Panc1 (cell line): ENCODE measurements at regions of chr1 and their contacts with region 1.

Region 1: DNA sequence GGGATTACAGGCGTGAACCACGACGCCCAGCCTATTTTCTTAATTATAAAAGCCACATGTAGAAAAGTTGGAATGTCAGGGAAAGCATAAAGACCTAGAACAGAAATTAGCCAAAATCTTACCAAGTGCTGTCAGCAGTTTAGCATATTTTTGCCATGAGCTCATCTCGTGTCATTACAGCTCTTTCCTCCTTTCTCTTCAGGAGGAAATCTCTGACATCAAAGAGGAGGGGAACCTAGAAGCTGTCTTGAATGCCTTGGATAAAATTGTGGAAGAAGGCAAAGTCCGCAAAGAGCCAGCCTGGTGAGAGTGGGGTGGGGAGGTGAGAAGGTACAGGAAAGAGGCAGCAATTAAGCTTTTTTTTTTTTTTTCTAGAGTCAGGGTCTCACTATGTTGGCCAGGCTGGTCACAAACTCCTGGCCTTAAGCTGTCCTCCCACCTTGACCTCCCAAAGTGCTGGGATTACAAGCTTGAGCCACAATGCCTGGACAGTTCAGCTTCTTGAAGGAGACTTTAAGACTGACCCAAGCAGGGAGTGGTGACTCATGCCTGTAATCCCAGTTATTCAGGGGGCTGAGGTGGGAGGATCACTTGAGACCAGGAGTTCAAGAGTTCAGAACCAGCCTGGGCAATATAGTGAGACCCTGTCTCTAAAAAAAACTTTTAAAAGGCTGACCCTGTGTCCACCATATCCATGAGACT is 8.4 kb upstream of the BGLAP start:
- DNase-seq: no peak
- ATAC-seq: no peak
- H3K4me3 ChIP-seq: no peak overlapping the region
- H3K27ac ChIP-seq: no peak overlapping the region
- H3K4me1 ChIP-seq: no peaks in the 10 kb centered on the region
- H3K27me3 ChIP-seq: no peaks in the 10 kb centered on the region
- CTCF ChIP-seq: no peak

Region 2: DNA sequence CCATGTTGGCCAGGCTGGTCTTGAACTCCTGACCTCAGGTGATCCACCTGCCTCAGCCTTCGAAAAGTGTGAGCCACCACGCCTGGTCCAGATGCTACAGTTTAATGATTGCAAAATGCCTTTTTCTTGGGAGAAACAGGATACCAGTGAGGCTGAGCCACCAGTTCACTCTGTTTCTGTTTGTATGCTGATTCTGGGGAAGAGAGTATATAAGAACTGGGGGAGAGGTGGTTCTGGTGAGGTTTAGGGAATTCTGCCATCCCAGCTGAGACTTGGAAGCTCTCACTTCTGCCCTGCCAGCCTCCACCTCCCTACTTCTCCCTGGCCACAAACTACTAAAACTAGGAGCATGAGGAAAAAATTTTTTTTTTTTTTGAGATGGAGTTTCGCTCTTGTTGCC is 28.9 kb before region 1 on chr1:
- CTCF ChIA-PET with region 1: interaction called, 10 read pairs
- POLR2A ChIA-PET with region 1: no interaction called
- in situ Hi-C with region 1: no loop called
- intact Hi-C with region 1: no loop called
- DNase-seq: no peak
- ATAC-seq: no peak
- H3K4me3 ChIP-seq: no peak overlapping the region
- H3K27ac ChIP-seq: no peak overlapping the region
- H3K4me1 ChIP-seq: no peaks in the 10 kb centered on the region
- H3K27me3 ChIP-seq: no peaks in the 10 kb centered on the region
- CTCF ChIP-seq: no peak